A549 (cell line): ENCODE measurements at regions of chr1 and their contacts with region 1.

Region 1: GRCh38 chr1:28088168-28088961 is at the start of gene EYA3:
- DNase-seq: peak; percentile 96 to 98
- ATAC-seq: peak; percentile 99
- H3K4me3 ChIP-seq: peak within 1 kb of the TSS; percentile 95
- H3K27ac ChIP-seq: peak within 1 kb of the TSS; percentile 91 to 92
- H3K4me1 ChIP-seq: peaks cover 23% of the 10 kb centered on the region; the same call in 2 of the 3 replicates
- CTCF ChIP-seq: no peak
- EP300 ChIP-seq: no peak
- POLR2A ChIP-seq: peak; percentile 58
- RAD21 ChIP-seq: no peak
- polyA plus RNA-seq, gene EYA3: 9.3 and 11.7 TPM in 2 replicates

Region 2: DNA sequence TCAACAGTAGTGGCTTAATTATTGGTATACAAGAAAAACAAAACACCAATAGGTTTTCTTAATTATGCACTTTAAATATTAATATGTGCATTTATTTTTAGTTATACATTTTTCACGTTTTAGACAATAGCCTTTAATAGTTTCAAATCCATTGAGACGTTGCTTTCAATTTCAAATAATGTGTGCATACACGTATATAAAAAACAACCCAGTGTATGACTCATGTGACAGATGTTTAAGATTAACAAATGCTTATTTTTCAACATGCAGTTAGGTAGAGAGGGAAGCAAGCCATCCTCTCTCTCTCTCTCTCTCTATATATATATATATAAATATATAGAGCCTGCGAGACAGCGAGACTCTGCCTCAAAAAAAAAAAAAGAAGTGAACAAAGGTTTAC is 24.3 kb before region 1 on chr1:
- CTCF ChIA-PET with region 1: no interaction called
- POLR2A ChIA-PET with region 1: no interaction called
- DNase-seq: no peak
- ATAC-seq: no peak
- H3K4me3 ChIP-seq: no peak overlapping the region
- H3K27ac ChIP-seq: no peak overlapping the region
- H3K4me1 ChIP-seq: peaks cover 33% of the 10 kb centered on the region; the same call in 2 of the 3 replicates
- CTCF ChIP-seq: no peak
- EP300 ChIP-seq: no peak
- POLR2A ChIP-seq: no peak
- RAD21 ChIP-seq: no peak

Region 3: DNA sequence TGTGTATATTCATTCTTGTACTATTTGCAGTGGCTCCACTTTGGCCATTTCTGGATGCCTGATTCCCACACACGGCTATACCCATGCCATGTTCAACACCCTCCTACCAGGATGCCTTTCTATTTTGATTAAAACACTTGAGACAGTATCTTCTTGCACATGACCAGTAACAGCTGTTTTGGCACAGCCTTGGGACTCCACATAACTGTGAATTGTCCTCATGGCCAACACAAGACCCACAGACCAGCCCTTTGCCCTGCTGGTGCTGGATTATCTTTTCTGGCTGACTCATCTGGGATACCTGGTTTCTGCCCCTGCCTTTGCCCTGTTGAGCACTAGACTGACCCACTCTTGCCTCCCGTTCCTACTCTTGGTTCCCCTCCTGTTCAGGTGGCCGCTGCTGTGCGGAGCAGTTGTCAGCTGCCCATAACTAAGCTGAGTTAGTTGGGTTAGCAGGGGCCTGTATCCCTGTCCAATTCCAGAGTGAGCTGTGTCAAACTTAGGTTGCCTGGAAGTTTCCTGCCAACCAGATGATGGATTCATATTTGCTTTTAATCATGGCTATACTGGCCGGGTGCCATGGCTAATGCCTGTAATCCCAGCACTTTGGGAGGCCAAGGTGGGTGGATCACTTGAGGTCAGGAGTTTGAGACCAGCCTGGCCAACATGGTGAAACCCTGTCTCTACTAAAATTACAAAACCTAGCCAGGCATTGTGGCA is 10.8 kb after region 1 on chr1:
- CTCF ChIA-PET with region 1: interaction called, 25 read pairs
- POLR2A ChIA-PET with region 1: interaction called, 6 read pairs
- DNase-seq: peak in 1 of 2 experiments; percentile 24
- ATAC-seq: peak; percentile 34 to 67; a peak in 4 of 6 replicates
- H3K4me3 ChIP-seq: no peak overlapping the region
- H3K27ac ChIP-seq: peak overlapping the region in 1 of 2 experiments; percentile 68; a peak in 3 of 6 replicates
- H3K4me1 ChIP-seq: peaks cover 5% of the 10 kb centered on the region
- CTCF ChIP-seq: no peak
- EP300 ChIP-seq: no peak
- POLR2A ChIP-seq: no peak
- RAD21 ChIP-seq: no peak

Region 4: DNA sequence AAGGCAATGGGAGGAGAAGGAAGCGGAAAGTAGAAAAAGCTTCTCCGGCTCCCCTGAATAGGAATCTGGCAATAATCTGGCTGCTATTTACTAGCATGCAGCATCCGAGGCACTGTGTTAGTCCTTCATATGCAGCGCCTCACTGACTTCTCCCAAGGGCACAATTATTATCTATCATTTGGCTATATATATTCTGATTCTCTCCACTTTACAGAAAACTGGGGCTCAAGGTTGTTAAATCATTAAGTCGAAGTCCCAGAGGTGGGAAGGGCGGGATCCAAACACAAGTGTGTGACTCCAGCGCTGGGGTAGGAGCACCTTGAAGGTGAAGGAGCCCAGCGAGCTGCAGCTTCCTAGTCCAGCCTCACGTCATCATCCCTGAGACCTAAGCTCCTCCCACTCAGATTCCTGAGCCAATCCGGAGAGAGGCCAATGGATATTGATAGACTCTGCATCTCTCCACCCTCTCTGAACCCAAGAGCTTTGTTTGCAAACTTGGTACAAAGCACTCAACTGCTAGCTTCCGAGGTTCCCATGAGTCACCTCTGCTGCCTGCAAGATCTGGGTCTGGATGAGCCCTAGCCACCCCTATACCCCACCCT is 16.6 kb after region 1 on chr1:
- CTCF ChIA-PET with region 1: interaction called, 25 read pairs
- POLR2A ChIA-PET with region 1: interaction called, 3 read pairs
- DNase-seq: peak in 1 of 2 experiments; percentile 67
- ATAC-seq: peak; percentile 84 to 92
- H3K4me3 ChIP-seq: no peak overlapping the region
- H3K27ac ChIP-seq: peak overlapping the region in 1 of 2 experiments; percentile 55; a peak in 1 of 6 replicates
- H3K4me1 ChIP-seq: 0 out of 3 replicates have a peak, but pooled peaks cover 7% of the 10 kb centered on the region
- CTCF ChIP-seq: no peak
- EP300 ChIP-seq: no peak
- POLR2A ChIP-seq: no peak
- RAD21 ChIP-seq: no peak

Region 5: GRCh38 chr1:28112388-28113241 is 24.2 kb after region 1 on chr1:
- CTCF ChIA-PET with region 1: interaction called, 22 read pairs
- POLR2A ChIA-PET with region 1: no interaction called
- DNase-seq: peak in 1 of 2 experiments; percentile 57
- ATAC-seq: peak; percentile 47 to 79; a peak in 4 of 6 replicates
- H3K4me3 ChIP-seq: no peak overlapping the region
- H3K27ac ChIP-seq: peak overlapping the region in 1 of 2 experiments; percentile 45; a peak in 3 of 6 replicates
- H3K4me1 ChIP-seq: peaks cover 11% of the 10 kb centered on the region; the same call in 1 of the 3 replicates
- CTCF ChIP-seq: no peak
- EP300 ChIP-seq: no peak
- POLR2A ChIP-seq: no peak
- RAD21 ChIP-seq: peak in 1 of 2 experiments; percentile 33; a peak in 2 of 5 replicates

Region 6: GRCh38 chr1:28154078-28154594 is 65.8 kb after region 1 on chr1:
- CTCF ChIA-PET with region 1: interaction called, 10 read pairs
- POLR2A ChIA-PET with region 1: interaction called, 3 read pairs
- DNase-seq: no peak
- ATAC-seq: no peak
- H3K4me3 ChIP-seq: no peak overlapping the region
- H3K27ac ChIP-seq: peak overlapping the region in 1 of 2 experiments; percentile 76; a peak in 4 of 6 replicates
- H3K4me1 ChIP-seq: peaks cover 11% of the 10 kb centered on the region
- CTCF ChIP-seq: no peak
- EP300 ChIP-seq: no peak
- POLR2A ChIP-seq: no peak
- RAD21 ChIP-seq: no peak

Region 7: DNA sequence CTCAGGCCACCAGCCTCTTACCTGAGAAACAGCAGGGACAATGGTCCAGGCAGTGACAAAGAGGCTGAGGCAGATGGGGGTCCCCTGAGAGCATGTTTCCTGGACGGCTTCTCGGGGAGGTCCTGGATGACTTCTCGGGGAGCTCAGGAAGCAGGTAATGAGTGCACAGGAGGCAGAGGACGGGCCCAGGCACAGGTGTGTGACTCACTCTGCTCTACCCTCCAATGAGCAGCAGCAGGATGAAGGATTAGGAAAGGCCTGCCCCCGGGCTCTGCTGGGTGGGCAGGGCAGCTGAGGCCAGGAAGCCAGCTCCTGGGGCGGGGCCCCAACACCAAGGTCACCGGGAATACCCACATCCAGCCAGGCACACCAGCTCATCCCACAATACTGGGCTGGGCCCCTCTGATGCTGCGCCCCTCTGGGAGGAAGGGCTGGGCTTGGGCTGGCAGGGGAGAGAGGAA is 105.4 kb after region 1 on chr1:
- CTCF ChIA-PET with region 1: interaction called, 19 read pairs
- POLR2A ChIA-PET with region 1: interaction called, 3 read pairs
- DNase-seq: no peak
- ATAC-seq: peak; percentile 49 to 51; a peak in 5 of 6 replicates
- H3K4me3 ChIP-seq: no peak overlapping the region
- H3K27ac ChIP-seq: peak overlapping the region in 1 of 2 experiments; percentile 69; a peak in 3 of 6 replicates
- H3K4me1 ChIP-seq: peaks cover 20% of the 10 kb centered on the region
- CTCF ChIP-seq: no peak
- EP300 ChIP-seq: no peak
- POLR2A ChIP-seq: no peak
- RAD21 ChIP-seq: no peak

Region 8: DNA sequence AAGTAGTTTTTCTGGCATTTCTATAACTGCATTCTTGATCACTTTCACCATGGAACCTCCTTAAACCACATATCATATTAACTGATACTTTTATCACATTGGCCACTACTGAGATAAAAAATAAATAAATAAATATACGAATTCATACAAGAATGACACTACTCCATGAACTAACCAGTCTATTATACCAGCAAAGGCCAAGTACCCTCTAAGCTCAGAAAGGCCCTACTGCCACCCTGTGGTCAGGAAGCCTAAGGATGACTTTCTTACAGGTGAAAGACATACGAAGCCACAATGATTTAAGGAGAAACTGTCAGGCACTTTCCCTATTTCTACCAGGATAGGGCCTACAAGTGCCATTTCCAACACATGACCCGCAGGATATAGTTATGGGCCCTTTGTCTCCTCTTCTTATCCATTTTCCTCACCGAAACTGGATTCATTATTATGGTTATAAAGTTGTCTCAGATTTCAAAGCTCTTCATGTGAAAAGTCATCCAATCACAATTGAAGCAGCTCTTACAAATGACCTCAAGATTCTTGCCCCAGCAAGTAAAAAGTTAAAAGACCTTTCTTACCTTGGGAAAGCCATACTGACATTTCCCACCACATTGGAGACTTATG is 120.6 kb after region 1 on chr1:
- CTCF ChIA-PET with region 1: interaction called, 144 read pairs
- POLR2A ChIA-PET with region 1: interaction called, 6 read pairs
- DNase-seq: peak; percentile 42 to 69
- ATAC-seq: peak; percentile 85 to 90
- H3K4me3 ChIP-seq: no peak overlapping the region
- H3K27ac ChIP-seq: no peak overlapping the region
- H3K4me1 ChIP-seq: 0 out of 3 replicates have a peak, but pooled peaks cover 3% of the 10 kb centered on the region
- CTCF ChIP-seq: peak; percentile 79
- EP300 ChIP-seq: no peak
- POLR2A ChIP-seq: no peak
- RAD21 ChIP-seq: peak; percentile 87 to 88

Region 9: GRCh38 chr1:28428012-28428411 is 339.6 kb after region 1 on chr1:
- CTCF ChIA-PET with region 1: no interaction called
- POLR2A ChIA-PET with region 1: no interaction called
- DNase-seq: no peak
- ATAC-seq: no peak
- H3K4me3 ChIP-seq: no peak overlapping the region
- H3K27ac ChIP-seq: no peak overlapping the region
- H3K4me1 ChIP-seq: no peaks in the 10 kb centered on the region
- CTCF ChIP-seq: no peak
- EP300 ChIP-seq: no peak
- POLR2A ChIP-seq: no peak
- RAD21 ChIP-seq: no peak